PC-9 (cell line): ENCODE measurements at regions of chr2 and their contacts with region 1.

Region 1: DNA sequence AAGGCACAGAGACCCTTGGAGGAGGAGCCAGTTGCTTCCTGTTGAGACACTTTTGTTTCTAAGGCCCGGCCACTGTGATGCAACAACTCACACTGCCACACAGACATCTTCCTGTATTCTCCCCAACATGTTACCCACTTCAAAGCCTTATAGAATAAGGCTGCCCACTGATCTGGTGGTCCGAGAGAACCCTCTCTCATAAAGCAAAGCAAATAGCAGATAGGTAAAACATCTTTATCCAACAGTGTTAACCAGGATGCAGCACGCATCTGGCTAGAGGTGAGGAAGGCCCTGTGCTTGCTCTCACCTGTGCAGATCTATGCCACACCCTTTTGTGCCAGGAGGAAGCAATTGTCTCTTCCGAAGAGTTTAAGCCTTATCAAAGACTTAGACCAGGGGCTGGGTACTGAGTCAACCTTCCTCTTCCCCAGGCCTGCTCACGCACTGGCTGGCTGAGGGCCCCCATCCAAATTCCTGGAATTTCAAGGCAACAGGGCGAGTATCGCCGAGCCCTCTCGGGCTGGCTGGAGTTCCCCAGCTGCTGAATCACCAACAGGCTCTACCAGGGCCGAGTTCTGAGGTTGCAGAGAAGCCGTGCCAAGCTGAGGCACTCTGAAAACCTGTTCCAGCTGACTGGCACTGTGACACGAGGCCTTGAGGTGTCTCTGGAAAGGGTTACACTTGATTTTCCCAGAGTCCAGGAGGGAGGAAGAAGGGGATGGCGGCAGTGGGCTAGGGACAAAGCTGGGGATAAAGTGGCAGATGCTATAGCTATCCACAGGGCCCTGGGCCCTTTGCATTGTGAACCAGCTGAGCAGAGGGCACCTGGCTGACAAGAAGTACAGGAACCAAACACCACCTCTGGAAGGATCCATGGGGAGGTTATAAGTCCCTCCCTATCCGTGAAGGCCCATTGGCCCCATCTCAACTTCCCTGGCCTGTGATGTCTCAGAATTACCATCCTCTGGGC is 29.3 kb downstream of the TGFA start:
- DNase-seq: peak; percentile 96 to 98
- H3K4me3 ChIP-seq: peak overlapping the region; percentile 41; the same call in 1 of the 2 replicates
- H3K27ac ChIP-seq: peak overlapping the region; percentile 100
- H3K4me1 ChIP-seq: peaks cover 74% of the 10 kb centered on the region
- H3K27me3 ChIP-seq: no peaks in the 10 kb centered on the region
- CTCF ChIP-seq: no peak

Region 2: GRCh38 chr2:70328921-70329561 is 195.2 kb before region 1 on chr2:
- CTCF ChIA-PET with region 1: no interaction called
- POLR2A ChIA-PET with region 1: no interaction called
- intact Hi-C with region 1: loop called (anchors 1 kb)
- DNase-seq: peak; percentile 93 to 97
- H3K4me3 ChIP-seq: peak overlapping the region; percentile 8; the same call in 1 of the 2 replicates
- H3K27ac ChIP-seq: peak overlapping the region; percentile 81
- H3K4me1 ChIP-seq: peaks cover 29% of the 10 kb centered on the region
- H3K27me3 ChIP-seq: no peaks in the 10 kb centered on the region
- CTCF ChIP-seq: no peak

Region 3: DNA sequence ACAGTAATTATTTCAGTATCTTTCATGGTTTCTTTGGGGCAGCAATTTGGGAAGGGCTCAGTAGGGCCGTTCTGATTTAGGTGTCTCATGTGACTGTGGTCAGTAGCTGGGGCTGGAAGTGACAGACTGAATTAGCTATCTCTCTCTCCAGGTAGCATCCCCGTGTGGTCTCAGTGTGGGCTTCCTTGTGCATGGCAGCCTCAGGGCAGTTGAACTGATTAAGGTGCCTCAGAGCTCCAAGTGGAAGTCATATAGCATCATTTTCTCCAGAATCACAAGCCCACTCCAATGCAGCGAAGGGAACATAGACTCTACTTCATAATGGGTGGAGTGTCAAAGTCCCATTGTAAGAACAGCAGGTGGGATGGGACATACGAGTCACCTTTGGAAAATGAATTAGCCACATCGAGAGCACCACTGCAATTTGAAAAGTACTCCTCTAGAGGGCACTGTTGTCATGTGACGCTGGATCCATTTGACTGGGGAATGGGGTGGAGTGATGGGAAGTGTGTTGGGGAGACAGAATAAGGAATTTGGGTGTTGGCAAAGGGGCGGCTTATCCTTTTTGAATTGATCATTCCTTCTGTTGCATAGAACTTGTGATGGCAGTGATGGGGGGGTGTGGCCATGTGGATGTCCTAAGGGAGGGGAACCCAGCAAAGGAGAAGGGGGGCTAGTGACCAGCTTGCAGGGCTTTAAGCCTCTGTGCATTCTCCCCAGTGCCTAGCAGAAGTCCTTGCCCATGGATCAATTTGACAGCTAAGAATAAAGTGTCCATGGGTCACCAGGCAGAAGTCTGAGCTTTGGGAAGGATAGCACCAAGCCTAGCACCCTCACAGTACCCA is 183.1 kb before region 1 on chr2:
- CTCF ChIA-PET with region 1: no interaction called
- POLR2A ChIA-PET with region 1: no interaction called
- intact Hi-C with region 1: loop called (anchors 1 kb)
- DNase-seq: peak; percentile 65 to 70
- H3K4me3 ChIP-seq: no peak overlapping the region
- H3K27ac ChIP-seq: no peak overlapping the region
- H3K4me1 ChIP-seq: peaks cover 17% of the 10 kb centered on the region
- H3K27me3 ChIP-seq: no peaks in the 10 kb centered on the region
- CTCF ChIP-seq: peak; percentile 90

Region 4: GRCh38 chr2:70357684-70358071 is 166.6 kb before region 1 on chr2:
- CTCF ChIA-PET with region 1: interaction called, 11 read pairs
- POLR2A ChIA-PET with region 1: no interaction called
- intact Hi-C with region 1: no loop called
- DNase-seq: peak; percentile 65 to 75
- H3K4me3 ChIP-seq: no peak overlapping the region
- H3K27ac ChIP-seq: peak overlapping the region; percentile 70
- H3K4me1 ChIP-seq: peaks cover 60% of the 10 kb centered on the region
- H3K27me3 ChIP-seq: no peaks in the 10 kb centered on the region
- CTCF ChIP-seq: no peak

Region 5: GRCh38 chr2:70381831-70382267 is 142.4 kb before region 1 on chr2:
- CTCF ChIA-PET with region 1: no interaction called
- POLR2A ChIA-PET with region 1: no interaction called
- intact Hi-C with region 1: loop called (anchors 10 kb)
- DNase-seq: peak; percentile 85 to 97
- H3K4me3 ChIP-seq: peak overlapping the region; percentile 34; the same call in 1 of the 2 replicates
- H3K27ac ChIP-seq: peak overlapping the region; percentile 98
- H3K4me1 ChIP-seq: peaks cover 35% of the 10 kb centered on the region
- H3K27me3 ChIP-seq: no peaks in the 10 kb centered on the region
- CTCF ChIP-seq: no peak

Region 6: DNA sequence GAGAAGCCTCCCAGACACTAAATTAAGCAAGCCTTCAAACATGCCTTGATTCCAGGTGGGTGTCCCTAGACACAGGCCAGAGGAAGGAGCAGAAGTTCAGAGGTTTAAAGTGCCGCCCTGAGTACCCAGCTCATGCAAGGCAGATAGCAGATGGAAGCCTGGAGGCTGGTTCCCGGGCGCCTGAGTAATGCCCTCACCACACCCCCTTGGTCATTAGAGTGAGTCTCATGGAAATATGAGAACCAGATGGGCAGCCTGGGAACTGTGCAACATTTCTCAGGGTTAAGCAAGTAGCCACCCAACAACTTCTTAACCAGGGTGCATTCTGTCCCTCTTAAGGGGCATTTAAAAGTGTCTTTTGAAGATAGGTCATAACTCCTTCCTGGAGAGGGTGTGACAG is 14.7 kb before region 1 on chr2:
- CTCF ChIA-PET with region 1: interaction called, 4 read pairs
- POLR2A ChIA-PET with region 1: no interaction called
- intact Hi-C with region 1: loop called (anchors 1 kb)
- DNase-seq: peak; percentile 74 to 96
- H3K4me3 ChIP-seq: peak overlapping the region; percentile 35; the same call in 1 of the 2 replicates
- H3K27ac ChIP-seq: peak overlapping the region; percentile 97
- H3K4me1 ChIP-seq: peaks cover 43% of the 10 kb centered on the region
- H3K27me3 ChIP-seq: no peaks in the 10 kb centered on the region
- CTCF ChIP-seq: no peak

Region 7: GRCh38 chr2:70771446-70771845 is 247.2 kb after region 1 on chr2:
- CTCF ChIA-PET with region 1: no interaction called
- POLR2A ChIA-PET with region 1: no interaction called
- intact Hi-C with region 1: no loop called
- DNase-seq: no peak
- H3K4me3 ChIP-seq: no peak overlapping the region
- H3K27ac ChIP-seq: no peak overlapping the region
- H3K4me1 ChIP-seq: no peaks in the 10 kb centered on the region
- H3K27me3 ChIP-seq: peaks cover 31% of the 10 kb centered on the region; the same call in 1 of the 2 replicates
- CTCF ChIP-seq: no peak